ENCODE measurements at regions of chr1 and their contacts with region 1.

Region 1: GRCh38 chr1:2194898-2195673 is 514 bp upstream of the FAAP20 start:
- DNase-seq: no peak
- H3K4me3 ChIP-seq: peak overlapping the region; percentile 66
- CTCF ChIP-seq: peak; percentile 92

Region 2: DNA sequence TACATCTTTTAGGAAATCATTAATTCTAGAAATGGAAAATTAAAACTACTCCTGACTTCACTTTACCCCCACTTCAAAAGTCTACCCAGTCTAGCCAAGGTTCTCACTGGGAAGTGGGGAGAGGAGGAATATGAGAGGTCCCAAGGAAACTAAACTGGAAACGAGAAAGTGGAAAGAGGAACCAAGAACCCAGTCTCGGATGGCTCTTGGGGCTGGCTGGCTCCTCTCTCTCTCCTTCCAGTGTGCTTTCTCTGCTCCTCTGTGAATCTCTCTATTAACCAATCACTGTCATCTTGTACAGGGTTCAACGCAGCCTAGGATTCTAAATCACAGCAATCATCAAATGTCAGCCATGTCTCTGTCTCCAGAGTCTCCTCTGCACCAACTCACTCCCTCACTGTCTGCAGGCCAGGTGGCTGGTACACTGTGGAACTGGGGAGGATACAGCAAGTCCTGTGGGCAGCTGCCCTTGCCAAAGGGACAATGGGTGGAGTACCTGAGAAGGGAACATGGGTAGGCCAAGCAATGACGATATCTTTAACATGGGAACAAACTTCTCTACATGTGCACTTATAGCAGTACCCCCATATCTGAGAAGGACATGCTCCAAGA is 337.9 kb before region 1 on chr1:
- CTCF ChIA-PET with region 1: no interaction called
- POLR2A ChIA-PET with region 1: no interaction called
- DNase-seq: no peak
- H3K4me3 ChIP-seq: no peak overlapping the region
- CTCF ChIP-seq: no peak

Region 3: GRCh38 chr1:2205191-2205952 is 10.3 kb after region 1 on chr1:
- CTCF ChIA-PET with region 1: interaction called, 29 read pairs
- POLR2A ChIA-PET with region 1: interaction called, 4 read pairs
- DNase-seq: no peak
- H3K4me3 ChIP-seq: peak overlapping the region; percentile 53
- CTCF ChIP-seq: no peak

Region 4: GRCh38 chr1:2227346-2228153 is 32.5 kb after region 1 on chr1:
- CTCF ChIA-PET with region 1: interaction called, 41 read pairs
- POLR2A ChIA-PET with region 1: interaction called, 9 read pairs
- DNase-seq: no peak
- H3K4me3 ChIP-seq: peak overlapping the region; percentile 83
- CTCF ChIP-seq: no peak

Region 5: DNA sequence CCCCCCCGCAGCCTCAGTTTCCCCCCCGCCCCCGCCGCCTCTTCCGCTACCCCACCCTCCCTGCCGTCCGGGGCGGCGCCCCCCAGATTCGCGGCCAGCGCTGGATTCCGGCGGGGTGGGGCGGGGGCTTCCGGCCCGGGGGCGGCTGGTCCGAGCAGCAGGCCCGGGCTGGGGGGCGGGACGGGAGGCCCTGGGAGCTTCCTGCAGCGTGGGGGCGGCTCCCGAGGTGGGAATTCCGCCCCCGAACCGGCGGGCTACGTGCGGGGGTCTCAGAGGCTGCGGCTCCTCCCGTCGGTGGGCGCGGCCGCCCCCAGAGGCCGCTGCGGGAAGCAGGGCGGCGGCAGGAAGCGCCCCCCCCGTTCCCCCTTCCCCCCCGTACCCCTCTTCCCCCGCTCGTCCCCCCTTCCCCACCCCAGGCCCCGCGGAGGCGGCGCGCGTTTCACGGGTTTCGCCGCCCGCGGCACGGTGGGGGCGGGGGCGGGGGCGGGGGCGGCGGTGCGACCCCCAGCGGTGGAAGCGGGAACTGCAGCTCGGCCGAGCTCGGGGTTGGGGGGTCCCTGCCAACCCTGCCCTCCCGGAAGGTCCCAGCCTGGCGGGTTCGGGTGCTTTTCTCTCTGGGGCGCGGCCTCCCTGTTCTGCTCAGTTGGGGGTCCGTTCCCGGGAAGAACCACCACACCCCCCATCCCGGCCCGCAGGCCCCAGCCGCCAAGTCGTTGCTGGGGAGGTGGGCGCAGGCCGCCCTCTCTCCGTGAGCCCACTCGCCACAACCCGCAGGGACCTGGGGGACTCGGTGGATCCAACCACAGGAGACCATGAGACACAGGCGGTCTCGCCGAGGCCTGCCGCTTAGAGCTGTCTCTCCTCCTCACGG is 120.0 kb after region 1 on chr1:
- CTCF ChIA-PET with region 1: interaction called, 43 read pairs
- POLR2A ChIA-PET with region 1: interaction called, 3 read pairs
- DNase-seq: no peak
- H3K4me3 ChIP-seq: peak overlapping the region; percentile 54
- CTCF ChIP-seq: peak; percentile 73

Region 6: DNA sequence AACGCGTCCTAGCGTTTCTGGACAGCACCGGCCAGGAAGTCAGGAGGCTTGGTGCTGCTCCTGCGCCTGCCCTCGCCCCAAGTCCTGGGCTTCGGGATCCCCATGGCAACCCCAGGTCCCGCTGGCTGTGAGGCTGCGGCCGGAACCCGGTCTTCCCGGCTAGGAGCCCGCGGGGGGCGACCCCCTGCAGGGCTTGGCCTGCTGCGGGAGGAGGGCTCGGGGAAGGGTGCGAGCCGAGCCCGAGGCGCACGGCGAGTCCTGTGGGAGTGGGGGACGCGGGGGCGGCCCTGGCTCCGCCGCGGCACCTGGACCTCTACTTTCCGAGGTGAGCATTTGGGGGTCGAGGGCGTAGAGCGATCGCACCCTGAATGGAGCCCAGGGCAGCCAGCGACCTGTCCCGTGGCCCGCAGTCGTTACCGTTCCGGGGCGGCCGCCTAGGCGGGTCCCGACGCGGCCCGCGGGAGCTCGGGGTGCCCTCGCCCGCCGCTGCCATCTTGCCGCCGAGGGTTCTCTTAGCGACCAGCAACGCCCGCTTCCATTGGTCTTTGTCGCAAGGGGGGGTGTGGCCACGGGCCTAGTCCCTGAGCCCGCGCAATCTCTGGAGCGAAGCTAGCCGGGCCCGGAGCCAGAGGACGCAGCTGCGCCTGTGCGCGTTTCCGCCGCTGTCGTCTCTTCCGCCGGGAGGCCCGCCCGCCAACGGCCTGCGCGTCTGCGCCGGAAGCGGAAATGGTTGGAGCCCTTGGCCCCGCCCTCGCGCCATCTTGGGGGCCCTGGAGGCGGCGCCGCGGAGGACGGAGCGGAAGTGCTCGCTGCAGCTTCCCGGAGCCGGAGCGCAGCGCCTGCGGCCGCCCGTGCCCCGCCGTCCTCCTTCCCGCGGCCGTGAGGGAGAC is 196.2 kb after region 1 on chr1 and contains the starts of genes MORN1 and RER1:
- CTCF ChIA-PET with region 1: interaction called, 891 read pairs
- POLR2A ChIA-PET with region 1: interaction called, 7 read pairs
- DNase-seq: peak; percentile 85
- H3K4me3 ChIP-seq: peak within 1 kb of the TSS; percentile 87
- CTCF ChIP-seq: no peak

Region 7: DNA sequence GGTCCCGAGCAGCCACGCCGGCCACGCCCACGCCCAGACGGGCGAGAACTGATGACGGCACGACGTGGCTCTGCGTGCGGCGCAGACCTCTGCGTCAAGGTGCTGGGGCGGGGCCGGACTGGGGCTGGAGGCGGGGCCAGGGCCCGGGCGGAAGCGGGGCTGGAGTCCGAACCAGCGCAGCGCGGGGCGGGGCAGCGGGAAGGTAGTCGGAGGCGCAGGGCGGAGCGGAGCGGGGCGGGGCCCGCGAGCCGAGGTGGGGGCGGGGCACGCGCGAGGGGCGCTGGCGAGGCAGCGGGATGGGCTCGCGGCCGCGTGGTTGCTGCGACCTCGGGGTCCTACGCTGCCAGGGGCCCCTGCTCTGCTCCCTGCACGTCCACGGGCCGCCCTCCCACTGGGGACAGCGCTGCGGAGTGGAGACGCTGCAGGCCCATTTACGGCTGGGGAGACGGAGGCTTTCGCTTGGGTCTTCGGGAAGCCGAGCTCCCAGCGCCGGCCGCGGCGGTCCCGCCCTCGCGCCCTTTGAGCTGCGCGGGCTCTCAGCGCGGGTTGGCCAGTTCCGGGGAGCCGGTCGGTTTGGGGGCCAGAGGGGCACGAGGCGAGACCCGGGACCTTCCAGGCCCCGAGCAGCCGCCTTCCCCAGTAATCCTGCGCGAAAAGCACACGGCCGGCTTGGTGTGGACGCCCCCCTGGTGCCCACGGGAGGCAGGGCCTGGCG is 217.6 kb after region 1 on chr1 and contains the start of gene PEX10:
- CTCF ChIA-PET with region 1: interaction called, 13 read pairs
- POLR2A ChIA-PET with region 1: interaction called, 5 read pairs
- DNase-seq: peak; percentile 24
- H3K4me3 ChIP-seq: peak within 1 kb of the TSS; percentile 87
- CTCF ChIP-seq: no peak

Measured in AG04449 (cell line).